Calu3 (cell line): ENCODE measurements at regions of chr19 and their contacts with region 1.

Region 1: GRCh38 chr19:46021531-46022041 is 1.3 kb downstream of the PGLYRP1 start:
- DNase-seq: no peak
- H3K4me3 Mint-ChIP-seq: no peak overlapping the region
- H3K27ac Mint-ChIP-seq: no peak overlapping the region
- H3K4me1 Mint-ChIP-seq: peaks cover 7% of the 10 kb centered on the region
- H3K27me3 Mint-ChIP-seq: peaks cover 4% of the 10 kb centered on the region
- CTCF ChIP-seq: no peak

Region 2: GRCh38 chr19:45939792-45940514 is 81.6 kb before region 1 on chr19:
- CTCF ChIA-PET with region 1: no interaction called
- intact Hi-C with region 1: no loop called
- DNase-seq: no peak
- H3K4me3 Mint-ChIP-seq: no peak overlapping the region
- H3K27ac Mint-ChIP-seq: no peak overlapping the region
- H3K4me1 Mint-ChIP-seq: no peaks in the 10 kb centered on the region
- H3K27me3 Mint-ChIP-seq: peaks cover 75% of the 10 kb centered on the region
- CTCF ChIP-seq: no peak

Region 3: DNA sequence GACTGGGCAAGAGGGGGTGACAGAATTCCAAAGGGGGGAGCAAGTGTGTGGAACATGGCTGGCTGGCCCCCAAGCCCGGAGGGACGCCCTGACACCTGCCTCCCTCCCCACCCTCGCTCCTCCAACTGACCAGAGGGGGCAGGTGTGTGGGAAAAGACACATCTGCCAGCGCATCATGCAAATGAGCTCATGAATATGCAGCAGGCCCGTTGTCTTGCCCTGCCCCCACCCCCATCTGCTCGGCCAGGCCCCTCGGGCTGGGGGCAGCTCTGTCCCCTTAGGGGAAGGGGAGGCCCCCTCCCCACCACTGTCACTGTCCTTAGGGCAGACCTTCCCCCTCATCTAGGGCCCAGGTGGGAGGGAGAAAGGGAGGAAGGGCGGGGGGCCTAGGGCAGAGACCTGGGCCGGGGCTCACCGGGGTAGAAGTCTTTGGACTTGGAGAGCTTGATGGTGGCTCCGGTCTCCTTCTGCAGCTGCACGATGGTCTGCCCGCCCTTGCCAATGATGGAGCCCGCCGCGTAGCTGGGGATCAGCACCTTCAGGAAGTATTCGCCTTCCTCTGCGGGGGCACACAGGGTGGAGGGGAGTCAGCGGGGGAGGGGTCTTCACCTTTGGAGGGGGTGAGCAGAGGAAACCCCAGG is 60.9 kb before region 1 on chr19:
- CTCF ChIA-PET with region 1: no interaction called
- intact Hi-C with region 1: no loop called
- DNase-seq: peak; percentile 32
- H3K4me3 Mint-ChIP-seq: no peak overlapping the region
- H3K27ac Mint-ChIP-seq: no peak overlapping the region
- H3K4me1 Mint-ChIP-seq: peaks cover 22% of the 10 kb centered on the region
- H3K27me3 Mint-ChIP-seq: peaks cover 81% of the 10 kb centered on the region
- CTCF ChIP-seq: no peak

Region 4: GRCh38 chr19:46181388-46181779 is 159.8 kb after region 1 on chr19:
- CTCF ChIA-PET with region 1: no interaction called
- intact Hi-C with region 1: loop called (anchors 10 kb)
- DNase-seq: no peak
- H3K4me3 Mint-ChIP-seq: no peak overlapping the region
- H3K27ac Mint-ChIP-seq: no peak overlapping the region
- H3K4me1 Mint-ChIP-seq: no peaks in the 10 kb centered on the region
- H3K27me3 Mint-ChIP-seq: peaks cover 89% of the 10 kb centered on the region
- CTCF ChIP-seq: no peak